SK-N-SH (cell line): ENCODE measurements at regions of chr2 and their contacts with region 1.

Region 1: DNA sequence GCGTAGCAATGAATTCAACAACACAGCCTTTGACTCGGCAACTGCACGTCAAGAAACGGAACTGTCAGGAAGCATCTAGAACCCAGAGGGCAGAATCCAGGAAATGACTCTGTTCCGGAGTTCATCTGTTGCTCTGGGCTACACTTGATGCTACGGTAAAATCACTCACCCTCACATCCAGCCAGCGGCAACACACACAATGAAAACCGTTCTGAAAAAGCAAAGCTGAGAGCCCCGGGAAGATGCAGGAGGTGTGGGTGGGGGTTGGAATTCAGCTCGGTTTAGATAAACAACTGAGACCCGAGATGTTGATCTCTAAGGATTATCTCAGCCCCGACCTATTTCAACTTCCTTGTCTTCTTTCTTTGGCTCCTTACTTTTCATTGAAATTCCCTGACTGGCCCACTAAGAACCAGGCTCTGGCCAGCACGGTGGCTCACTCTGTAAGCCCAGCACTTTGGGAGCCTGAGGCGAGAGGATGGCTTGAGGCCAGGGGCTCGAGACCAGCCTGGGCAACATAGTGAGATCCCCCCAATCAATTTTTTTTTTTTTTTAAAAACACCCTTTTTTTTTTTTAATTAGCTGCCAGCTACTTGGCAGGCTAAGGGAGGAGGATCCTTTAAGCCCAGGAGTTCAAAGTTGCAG is 13.3 kb upstream of the RAB17 start:
- DNase-seq: no peak
- H3K4me3 ChIP-seq: no peak overlapping the region
- H3K27ac ChIP-seq: no peak overlapping the region
- H3K4me1 ChIP-seq: peaks cover 0 to 3% of the 10 kb centered on the region in 2 experiments; a peak in 1 of 4 replicates
- H3K27me3 ChIP-seq: no peaks in the 10 kb centered on the region
- CTCF ChIP-seq: no peak
- EP300 ChIP-seq: no peak
- RAD21 ChIP-seq: no peak

Region 2: GRCh38 chr2:237581751-237582746 is 21.8 kb before region 1 on chr2:
- CTCF ChIA-PET with region 1: interaction called, 31 read pairs
- POLR2A ChIA-PET with region 1: no interaction called
- DNase-seq: peak; percentile 69
- H3K4me3 ChIP-seq: no peak overlapping the region
- H3K27ac ChIP-seq: peak overlapping the region in 1 of 2 experiments; percentile 77; a peak in 1 of 4 replicates
- H3K4me1 ChIP-seq: peaks cover 0 to 21% of the 10 kb centered on the region in 2 experiments; a peak in 1 of 4 replicates
- H3K27me3 ChIP-seq: no peaks in the 10 kb centered on the region
- CTCF ChIP-seq: peak; percentile 61
- EP300 ChIP-seq: no peak
- RAD21 ChIP-seq: peak; percentile 77

Region 3: GRCh38 chr2:237624565-237624964 is 20.7 kb after region 1 on chr2:
- CTCF ChIA-PET with region 1: no interaction called
- POLR2A ChIA-PET with region 1: no interaction called
- DNase-seq: no peak
- H3K4me3 ChIP-seq: no peak overlapping the region
- H3K27ac ChIP-seq: no peak overlapping the region
- H3K4me1 ChIP-seq: peaks cover 8 to 14% of the 10 kb centered on the region in 2 experiments; a peak in 3 of 4 replicates
- H3K27me3 ChIP-seq: no peaks in the 10 kb centered on the region
- CTCF ChIP-seq: no peak
- EP300 ChIP-seq: no peak
- RAD21 ChIP-seq: no peak